Activated CD4-positive, alpha-beta T cell treated with anti-CD3 and anti-CD28 coated beads, Interleukin-2, amount 10 ng/mL, durations not matched to agents 24 days and 14 days (primary cell): ENCODE measurements at regions of chr17 and their contacts with region 1.

Region 1: DNA sequence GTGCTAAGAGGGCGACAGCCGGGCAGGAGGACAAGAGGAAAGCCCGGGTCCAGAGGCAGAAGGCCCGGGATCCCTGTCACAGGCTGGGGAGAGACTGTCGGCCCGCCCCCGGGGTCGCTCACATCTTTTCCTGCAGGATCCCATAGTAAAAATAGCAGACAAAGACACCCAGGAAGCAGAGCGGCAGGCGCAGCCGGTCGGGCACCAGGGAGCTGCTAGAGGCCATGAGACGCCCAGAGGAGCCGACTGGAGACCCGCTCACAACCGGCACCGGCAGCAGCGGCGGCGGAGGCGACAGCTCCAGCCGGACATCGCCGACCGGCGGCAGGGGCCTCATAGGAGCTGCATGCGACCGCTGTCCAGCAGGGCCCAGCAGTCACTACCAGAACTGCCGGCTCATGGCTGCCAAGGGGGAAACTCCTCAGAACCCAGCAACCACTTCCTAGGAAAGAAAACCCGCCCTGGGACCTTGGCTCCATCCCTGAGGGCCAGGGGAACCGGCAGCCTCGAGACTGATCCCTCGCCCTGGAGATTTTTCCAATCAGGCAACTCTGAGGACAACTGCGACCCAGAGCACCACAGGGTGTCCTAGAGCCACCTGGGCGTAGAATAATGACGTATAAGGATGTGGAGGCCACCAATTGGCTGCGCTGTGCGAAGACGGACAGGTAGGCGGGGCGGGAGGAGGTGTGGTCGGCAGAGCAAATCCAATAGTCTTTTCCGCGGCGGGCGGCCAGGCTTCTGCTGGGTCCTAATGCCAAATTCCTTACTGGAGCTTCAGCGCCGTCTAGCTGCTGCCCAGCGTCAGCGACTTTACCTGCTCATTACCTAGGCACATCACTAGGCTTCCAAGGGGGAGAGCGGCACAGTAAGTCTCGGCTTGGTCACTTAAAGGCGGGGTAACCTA is at the start of gene SLC35B1:
- DNase-seq: peak; percentile 99
- H3K4me3 Mint-ChIP-seq: peak within 1 kb of the TSS; percentile 96
- H3K27ac Mint-ChIP-seq: peak within 1 kb of the TSS; percentile 99
- H3K4me1 Mint-ChIP-seq: peaks cover 30% of the 10 kb centered on the region
- H3K27me3 Mint-ChIP-seq: no peaks in the 10 kb centered on the region
- total RNA-seq, gene SLC35B1: 78.9 and 79.5 TPM in 2 replicates

Region 2: DNA sequence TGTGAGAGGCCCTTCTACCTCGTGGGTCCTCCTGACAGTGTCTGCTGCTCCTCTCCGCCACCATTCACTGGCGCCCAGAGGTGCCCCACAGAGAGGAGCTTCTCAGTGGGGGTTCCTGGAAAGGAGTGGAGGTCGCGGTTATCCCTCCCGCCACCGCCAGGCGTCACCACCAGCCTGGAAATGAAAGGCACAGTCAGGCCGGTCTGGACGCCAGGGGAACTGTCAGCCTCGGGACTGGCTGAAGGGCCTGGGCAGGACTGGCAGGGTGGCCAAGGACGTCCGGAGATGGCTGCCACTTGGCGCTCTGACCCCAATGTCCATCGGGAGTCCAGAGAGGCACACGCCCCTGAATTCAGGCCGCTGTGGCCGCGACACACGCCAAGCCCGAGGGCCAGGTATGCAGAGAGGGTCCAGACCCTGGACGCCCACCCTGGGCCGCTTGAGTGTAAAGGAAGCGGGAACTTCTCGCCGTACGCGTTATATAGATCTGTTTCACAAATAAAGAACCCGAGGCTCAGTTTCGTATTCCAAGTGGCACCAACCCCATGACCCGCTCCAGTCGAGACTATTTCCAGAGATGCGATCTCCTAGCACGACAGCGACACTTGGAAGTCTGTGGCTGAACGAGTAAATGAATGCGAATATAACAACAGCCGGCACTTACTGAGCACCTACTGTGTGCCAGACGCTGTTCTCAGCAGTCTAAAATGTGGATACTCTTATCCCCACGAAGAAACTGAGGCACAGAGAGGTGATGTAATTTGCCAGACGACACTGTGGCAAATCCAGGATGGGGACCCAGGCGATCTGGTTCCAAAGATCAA is 139.8 kb before region 1 on chr17:
- intact Hi-C with region 1: loop called (anchors 1 kb)
- DNase-seq: peak; percentile 95
- H3K4me3 Mint-ChIP-seq: peak overlapping the region; percentile 70
- H3K27ac Mint-ChIP-seq: no peak overlapping the region
- H3K4me1 Mint-ChIP-seq: peaks cover 32% of the 10 kb centered on the region
- H3K27me3 Mint-ChIP-seq: peaks cover 35% of the 10 kb centered on the region

Region 3: DNA sequence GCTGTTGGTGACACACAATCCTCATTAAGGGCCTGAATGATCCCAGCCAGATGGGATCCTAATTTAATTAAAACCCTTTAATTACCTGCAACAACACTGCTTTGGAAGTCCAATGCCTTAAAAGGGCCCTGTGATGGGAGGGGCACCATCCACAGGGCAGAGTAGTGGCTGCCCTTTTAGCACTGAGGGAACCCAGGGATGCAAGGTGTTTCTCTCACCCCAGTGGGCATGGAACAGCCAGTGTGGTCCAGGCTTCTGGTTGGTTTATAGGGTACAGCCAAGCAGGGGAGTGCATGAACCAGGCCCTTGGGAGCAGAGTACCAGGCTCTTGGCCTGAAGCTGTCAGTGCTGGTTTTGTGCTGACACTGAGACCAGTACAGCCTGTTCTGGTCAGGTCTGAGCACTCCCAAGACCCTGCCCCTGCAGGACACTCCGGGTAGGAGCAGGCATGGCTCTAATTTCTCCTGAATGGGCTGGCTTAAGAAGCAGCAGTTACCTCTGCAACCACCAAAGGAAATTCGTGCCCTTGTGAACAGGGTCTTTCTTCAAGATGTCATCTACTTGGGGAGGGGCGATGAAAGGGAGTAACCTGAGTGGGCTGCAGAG is 122.3 kb before region 1 on chr17:
- intact Hi-C with region 1: no loop called
- DNase-seq: no peak
- H3K4me3 Mint-ChIP-seq: no peak overlapping the region
- H3K27ac Mint-ChIP-seq: no peak overlapping the region
- H3K4me1 Mint-ChIP-seq: no peaks in the 10 kb centered on the region
- H3K27me3 Mint-ChIP-seq: no peaks in the 10 kb centered on the region

Region 4: GRCh38 chr17:49694847-49695683 is 12.8 kb before region 1 on chr17:
- intact Hi-C with region 1: loop called (anchors 1 kb)
- DNase-seq: peak; percentile 92
- H3K4me3 Mint-ChIP-seq: peak overlapping the region; percentile 58
- H3K27ac Mint-ChIP-seq: peak overlapping the region; percentile 82
- H3K4me1 Mint-ChIP-seq: peaks cover 32% of the 10 kb centered on the region
- H3K27me3 Mint-ChIP-seq: no peaks in the 10 kb centered on the region

Region 5: DNA sequence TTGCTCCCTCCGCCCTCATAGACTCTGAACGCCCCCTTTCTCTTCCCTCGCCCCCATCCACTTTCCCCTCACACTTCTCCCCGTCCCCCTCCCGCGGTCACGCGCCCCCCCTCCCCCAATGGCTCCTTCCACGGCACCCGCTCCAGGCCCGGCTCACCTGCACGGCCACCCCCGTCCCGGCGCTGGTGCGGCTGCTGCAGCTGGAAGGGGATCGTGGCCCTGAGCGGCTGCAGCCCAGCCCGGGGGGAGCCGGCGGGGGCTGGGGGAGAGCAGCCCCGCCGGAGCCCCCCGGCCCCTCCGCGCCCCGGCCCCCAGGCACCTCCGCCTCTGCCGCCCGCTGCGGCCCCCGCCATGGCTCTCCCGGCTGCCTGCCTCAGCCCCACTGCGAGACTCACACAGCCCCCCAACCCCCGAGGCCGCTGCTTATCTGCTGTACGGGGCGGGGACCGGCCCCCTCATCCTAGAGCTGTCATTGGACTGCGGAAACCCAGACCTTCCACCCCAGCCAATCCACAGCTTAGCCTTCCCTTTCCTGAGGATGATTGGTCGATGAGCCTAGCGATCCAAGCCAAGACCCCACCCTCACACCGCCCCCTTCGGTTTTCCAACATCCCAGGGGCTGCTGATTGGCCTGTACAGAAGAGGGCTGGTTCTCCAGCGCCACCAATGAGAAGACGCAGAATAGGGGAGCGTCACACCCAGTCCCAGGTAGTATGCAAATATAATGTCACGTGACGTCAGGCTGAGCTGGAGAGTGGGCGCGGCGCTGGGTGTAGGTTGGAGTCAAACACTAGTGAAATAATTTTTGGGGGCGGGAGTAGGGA is 56.1 kb after region 1 on chr17 and contains the start of gene FAM117A:
- intact Hi-C with region 1: loop called (anchors 1 kb)
- DNase-seq: peak; percentile 98
- H3K4me3 Mint-ChIP-seq: peak within 1 kb of the TSS; percentile 96
- H3K27ac Mint-ChIP-seq: peak within 1 kb of the TSS; percentile 92
- H3K4me1 Mint-ChIP-seq: peaks cover 52% of the 10 kb centered on the region
- H3K27me3 Mint-ChIP-seq: peaks cover 29% of the 10 kb centered on the region
- total RNA-seq, gene FAM117A: 10.9 and 11.1 TPM in 2 replicates

Region 6: GRCh38 chr17:49851387-49852291 is 143.8 kb after region 1 on chr17:
- intact Hi-C with region 1: loop called (anchors 2 kb)
- DNase-seq: peak; percentile 88
- H3K4me3 Mint-ChIP-seq: peak overlapping the region; percentile 87
- H3K27ac Mint-ChIP-seq: peak overlapping the region; percentile 81
- H3K4me1 Mint-ChIP-seq: peaks cover 15% of the 10 kb centered on the region
- H3K27me3 Mint-ChIP-seq: peaks cover 17% of the 10 kb centered on the region

Region 7: GRCh38 chr17:50094753-50095619 is 387.1 kb after region 1 on chr17 and contains the start of gene PDK2:
- intact Hi-C with region 1: loop called (anchors 1 kb)
- DNase-seq: peak; percentile 99
- H3K4me3 Mint-ChIP-seq: peak within 1 kb of the TSS; percentile 89
- H3K27ac Mint-ChIP-seq: peak within 1 kb of the TSS; percentile 93
- H3K4me1 Mint-ChIP-seq: peaks cover 24% of the 10 kb centered on the region
- H3K27me3 Mint-ChIP-seq: no peaks in the 10 kb centered on the region
- total RNA-seq, gene PDK2: 10.9 and 11.8 TPM in 2 replicates